HepG2 (cell line): ENCODE measurements at regions of chrX and their contacts with region 1.

Region 1: GRCh38 chrX:65241059-65241721 is 264.9 kb upstream of the ZC4H2 start:
- DNase-seq: peak; percentile 83
- ATAC-seq: peak; percentile 98
- H3K4me3 ChIP-seq: peak overlapping the region; percentile 30 to 50 (median 38); a peak in 5 of 6 replicates
- H3K27ac ChIP-seq: peak overlapping the region; percentile 78
- H3K4me1 ChIP-seq: peaks cover 40% of the 10 kb centered on the region
- H3K27me3 ChIP-seq: no peaks in the 10 kb centered on the region
- CTCF ChIP-seq: no peak
- EP300 ChIP-seq: peak in 1 of 2 experiments; percentile 42; a peak in 2 of 4 replicates
- POLR2A ChIP-seq: no peak
- RAD21 ChIP-seq: no peak

Region 2: DNA sequence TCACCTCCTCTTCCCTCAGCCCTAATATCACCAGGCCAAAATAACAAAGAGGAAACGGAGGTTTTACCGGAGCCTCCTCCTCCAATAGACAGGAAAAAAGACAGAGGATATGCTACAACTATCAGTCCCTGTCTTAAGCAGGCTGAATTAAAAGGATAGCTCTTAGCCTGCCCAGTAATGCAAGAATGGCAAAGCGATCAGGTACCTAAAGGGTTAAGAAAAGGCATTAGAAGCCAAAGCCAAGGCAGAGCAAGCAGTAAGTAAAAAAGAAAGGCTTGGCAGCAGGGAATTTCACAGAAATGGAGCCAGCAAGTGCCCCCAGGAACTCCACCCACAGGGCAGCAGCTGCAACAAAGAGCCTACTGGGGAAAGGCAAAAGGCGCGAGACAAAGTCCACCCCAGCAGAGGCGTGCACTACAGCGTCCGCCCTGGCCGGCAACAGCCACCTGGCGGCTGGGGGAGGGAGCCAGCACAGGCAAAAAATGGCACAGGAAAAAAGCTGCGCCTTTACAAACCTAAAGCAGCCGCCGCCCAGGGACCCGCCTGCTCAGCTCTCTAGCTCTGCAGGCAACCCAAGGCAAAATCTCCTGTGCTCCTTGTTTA is 44.3 kb before region 1 on chrX:
- CTCF ChIA-PET with region 1: no interaction called
- POLR2A ChIA-PET with region 1: interaction called, 16 read pairs
- in situ Hi-C with region 1: no loop called
- intact Hi-C with region 1: loop called (anchors 1 kb)
- DNase-seq: peak; percentile 79
- ATAC-seq: peak; percentile 98
- H3K4me3 ChIP-seq: peak overlapping the region; percentile 43 to 68 (median 63)
- H3K27ac ChIP-seq: peak overlapping the region; percentile 86
- H3K4me1 ChIP-seq: peaks cover 18% of the 10 kb centered on the region
- H3K27me3 ChIP-seq: no peaks in the 10 kb centered on the region
- CTCF ChIP-seq: peak; percentile 76
- EP300 ChIP-seq: peak in 1 of 2 experiments; percentile 22; a peak in 1 of 4 replicates
- POLR2A ChIP-seq: peak in 1 of 2 experiments; percentile 29; a peak in 1 of 4 replicates
- RAD21 ChIP-seq: peak; percentile 81

Region 3: GRCh38 chrX:65451663-65452062 is 210.5 kb after region 1 on chrX:
- CTCF ChIA-PET with region 1: no interaction called
- POLR2A ChIA-PET with region 1: no interaction called
- in situ Hi-C with region 1: no loop called
- intact Hi-C with region 1: loop called (anchors 2 kb)
- DNase-seq: peak; percentile 15
- ATAC-seq: peak; percentile 47; the same call in 2 of the 3 replicates
- H3K4me3 ChIP-seq: no peak overlapping the region
- H3K27ac ChIP-seq: no peak overlapping the region
- H3K4me1 ChIP-seq: no peaks in the 10 kb centered on the region
- H3K27me3 ChIP-seq: no peaks in the 10 kb centered on the region
- CTCF ChIP-seq: peak; percentile 53
- EP300 ChIP-seq: no peak
- POLR2A ChIP-seq: no peak
- RAD21 ChIP-seq: no peak